Natural killer cell (primary cell): ENCODE measurements at regions of chr10 and their contacts with region 1.

Region 1: GRCh38 chr10:79068562-79069324 is at the start of gene ZMIZ1:
- DNase-seq: peak; percentile 82 to 87
- ATAC-seq: peak; percentile 64 to 79 (median 74)
- H3K4me3 ChIP-seq: peak within 1 kb of the TSS; percentile 82
- H3K4me3 Mint-ChIP-seq: peak within 1 kb of the TSS; percentile 91
- H3K27ac ChIP-seq: peak within 1 kb of the TSS; percentile 45
- H3K27ac Mint-ChIP-seq: peak within 1 kb of the TSS; percentile 69 to 92
- H3K4me1 ChIP-seq: peaks cover 63% of the 10 kb centered on the region
- H3K4me1 Mint-ChIP-seq: peaks cover 8 to 72% of the 10 kb centered on the region in 2 donors
- H3K27me3 ChIP-seq: no peaks in the 10 kb centered on the region
- H3K27me3 Mint-ChIP-seq: no peaks in the 10 kb centered on the region
- CTCF ChIP-seq: no peak
- total RNA-seq, gene ZMIZ1: 36.5 to 51.5 (median 37.9) TPM

Region 2: DNA sequence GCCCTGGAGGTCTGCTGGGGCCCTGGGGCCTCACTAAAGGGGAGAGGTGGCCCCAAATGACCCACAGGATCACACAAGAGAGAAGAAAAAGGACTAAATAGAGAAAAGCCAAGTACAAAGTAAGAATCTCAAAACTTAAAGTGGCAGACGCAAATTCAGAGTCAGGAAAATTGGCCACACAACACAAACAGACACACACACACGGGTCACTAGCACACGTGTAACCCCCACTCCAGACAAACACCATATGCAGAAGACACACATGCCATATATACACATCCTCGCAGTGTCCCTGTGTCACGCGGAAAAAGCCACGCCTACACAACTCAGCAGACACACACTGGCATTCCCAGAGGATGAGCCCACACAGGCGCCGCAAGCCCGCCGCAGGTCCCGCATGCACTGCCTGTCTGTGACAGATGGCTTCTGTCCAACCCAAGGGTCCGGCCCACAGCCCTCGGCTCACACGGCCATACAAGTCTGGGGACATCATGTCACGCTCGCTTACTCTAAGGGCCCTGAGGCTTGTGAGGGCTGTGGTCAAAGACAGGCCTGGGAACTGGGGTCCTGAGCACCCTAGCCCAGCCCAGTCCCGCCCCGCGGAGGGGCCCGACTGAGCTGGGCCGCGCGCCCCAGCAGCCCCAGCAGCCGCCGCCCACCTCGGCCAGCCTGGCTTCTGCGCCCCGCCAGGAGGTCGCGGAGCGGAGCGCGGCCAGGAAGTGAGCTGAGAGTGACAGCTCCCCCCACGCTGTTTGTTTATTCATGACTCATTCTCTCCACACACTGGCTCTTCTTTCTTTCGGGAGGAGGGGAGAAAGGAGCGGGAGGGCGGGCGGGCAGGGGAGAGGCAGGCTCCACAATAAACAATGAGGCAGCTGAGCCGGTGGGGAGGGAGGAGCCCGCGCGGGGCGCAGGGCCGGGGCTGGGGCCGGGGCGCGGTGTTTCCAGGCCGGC is 95.5 kb before region 1 on chr10:
- intact Hi-C with region 1: loop called (anchors 1 kb)
- DNase-seq: peak; percentile 73 to 83
- ATAC-seq: peak; percentile 69 to 82 (median 79)
- H3K4me3 ChIP-seq: peak overlapping the region; percentile 18
- H3K4me3 Mint-ChIP-seq: peak overlapping the region; percentile 78
- H3K27ac ChIP-seq: no peak overlapping the region
- H3K27ac Mint-ChIP-seq: peak overlapping the region; percentile 27 to 97
- H3K4me1 ChIP-seq: peaks cover 17% of the 10 kb centered on the region
- H3K4me1 Mint-ChIP-seq: peaks cover 16 to 24% of the 10 kb centered on the region in 2 donors
- H3K27me3 ChIP-seq: no peaks in the 10 kb centered on the region
- H3K27me3 Mint-ChIP-seq: peaks cover 4 to 8% of the 10 kb centered on the region in 2 donors
- CTCF ChIP-seq: no peak

Region 3: GRCh38 chr10:79025199-79025832 is 43.4 kb before region 1 on chr10:
- intact Hi-C with region 1: loop called (anchors 2 kb)
- DNase-seq: peak; percentile 70 to 78
- ATAC-seq: peak; percentile 57 to 74 (median 68)
- H3K4me3 ChIP-seq: no peak overlapping the region
- H3K4me3 Mint-ChIP-seq: peak overlapping the region; percentile 18
- H3K27ac ChIP-seq: no peak overlapping the region
- H3K27ac Mint-ChIP-seq: peak overlapping the region; percentile 5 to 59
- H3K4me1 ChIP-seq: peaks cover 52% of the 10 kb centered on the region
- H3K4me1 Mint-ChIP-seq: peaks cover 39 to 42% of the 10 kb centered on the region in 2 donors
- H3K27me3 ChIP-seq: peaks cover 5% of the 10 kb centered on the region
- H3K27me3 Mint-ChIP-seq: peaks cover 26 to 38% of the 10 kb centered on the region in 2 donors
- CTCF ChIP-seq: no peak

Region 4: DNA sequence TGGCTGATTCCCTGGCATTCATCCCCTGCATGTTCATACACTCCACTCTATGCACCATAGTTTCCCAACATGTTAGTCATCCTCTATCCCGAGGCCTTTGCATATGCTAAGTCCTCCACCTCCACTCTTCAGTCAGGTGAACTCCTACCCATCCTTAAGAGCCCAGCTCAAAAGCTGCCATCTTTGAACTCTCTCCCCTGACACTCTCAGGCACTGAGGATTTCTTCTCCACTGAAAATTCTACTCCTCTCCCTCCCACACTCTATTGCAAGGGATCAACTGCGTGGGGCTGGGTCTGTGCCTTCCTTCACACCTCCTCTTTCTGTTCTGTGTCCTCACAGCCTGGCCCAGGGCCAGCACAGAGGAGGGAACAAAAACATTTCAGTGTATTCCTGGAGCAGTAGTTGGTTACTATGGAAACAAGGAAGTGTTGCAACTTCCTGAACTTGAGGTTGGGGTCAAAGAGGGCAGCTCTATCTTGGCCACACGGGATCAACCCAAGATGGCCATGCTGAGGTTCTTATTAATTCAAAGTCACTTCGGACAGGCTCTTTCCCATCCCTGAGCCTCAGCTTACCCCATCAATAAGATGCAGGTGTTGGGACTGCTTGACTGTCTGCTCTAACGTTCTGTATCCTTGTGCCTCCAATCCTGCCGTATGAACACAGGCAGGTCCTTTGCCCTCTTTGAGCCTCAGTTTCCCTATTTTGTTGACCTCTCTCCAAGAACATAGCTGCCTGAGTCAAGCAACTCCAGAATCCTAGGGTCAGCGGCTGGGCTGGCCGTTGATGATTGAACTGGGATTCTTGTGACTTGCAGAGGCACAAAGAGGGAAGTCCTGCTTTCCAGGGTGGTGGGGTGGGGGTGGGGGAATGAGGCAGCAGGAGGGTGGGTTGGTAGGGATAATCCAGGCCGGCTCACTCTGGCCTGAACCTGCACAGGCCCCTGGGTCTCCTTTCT is 15.5 kb after region 1 on chr10:
- intact Hi-C with region 1: no loop called
- DNase-seq: peak in 1 of 2 donors; percentile 42
- ATAC-seq: peak; percentile 70 to 79 (median 71)
- H3K4me3 ChIP-seq: no peak overlapping the region
- H3K4me3 Mint-ChIP-seq: peak overlapping the region; percentile 25
- H3K27ac ChIP-seq: peak overlapping the region; percentile 32
- H3K27ac Mint-ChIP-seq: peak overlapping the region; percentile 45 to 77
- H3K4me1 ChIP-seq: peaks cover 70% of the 10 kb centered on the region
- H3K4me1 Mint-ChIP-seq: peaks cover 49 to 68% of the 10 kb centered on the region in 2 donors
- H3K27me3 ChIP-seq: no peaks in the 10 kb centered on the region
- H3K27me3 Mint-ChIP-seq: no peaks in the 10 kb centered on the region
- CTCF ChIP-seq: no peak

Region 5: GRCh38 chr10:79116801-79117723 is 48.3 kb after region 1 on chr10:
- intact Hi-C with region 1: no loop called
- DNase-seq: no peak
- ATAC-seq: peak in 2 of 3 donors; percentile 30 to 46
- H3K4me3 ChIP-seq: no peak overlapping the region
- H3K4me3 Mint-ChIP-seq: peak overlapping the region; percentile 87
- H3K27ac ChIP-seq: peak overlapping the region; percentile 8
- H3K27ac Mint-ChIP-seq: peak overlapping the region; percentile 73 to 86
- H3K4me1 ChIP-seq: peaks cover 72% of the 10 kb centered on the region
- H3K4me1 Mint-ChIP-seq: peaks cover 71 to 84% of the 10 kb centered on the region in 2 donors
- H3K27me3 ChIP-seq: no peaks in the 10 kb centered on the region
- H3K27me3 Mint-ChIP-seq: no peaks in the 10 kb centered on the region
- CTCF ChIP-seq: no peak

Region 6: GRCh38 chr10:79149662-79150443 is 81.1 kb after region 1 on chr10:
- intact Hi-C with region 1: loop called (anchors 5 kb)
- DNase-seq: peak; percentile 36 to 53
- ATAC-seq: peak; percentile 73 to 83 (median 74)
- H3K4me3 ChIP-seq: no peak overlapping the region
- H3K4me3 Mint-ChIP-seq: peak overlapping the region; percentile 78
- H3K27ac ChIP-seq: peak overlapping the region; percentile 29
- H3K27ac Mint-ChIP-seq: peak overlapping the region; percentile 70 to 71
- H3K4me1 ChIP-seq: peaks cover 74% of the 10 kb centered on the region
- H3K4me1 Mint-ChIP-seq: peaks cover 47 to 82% of the 10 kb centered on the region in 2 donors
- H3K27me3 ChIP-seq: no peaks in the 10 kb centered on the region
- H3K27me3 Mint-ChIP-seq: no peaks in the 10 kb centered on the region
- CTCF ChIP-seq: no peak